ENCODE measurements at regions of chr2 and their contacts with region 1.

Region 1: DNA sequence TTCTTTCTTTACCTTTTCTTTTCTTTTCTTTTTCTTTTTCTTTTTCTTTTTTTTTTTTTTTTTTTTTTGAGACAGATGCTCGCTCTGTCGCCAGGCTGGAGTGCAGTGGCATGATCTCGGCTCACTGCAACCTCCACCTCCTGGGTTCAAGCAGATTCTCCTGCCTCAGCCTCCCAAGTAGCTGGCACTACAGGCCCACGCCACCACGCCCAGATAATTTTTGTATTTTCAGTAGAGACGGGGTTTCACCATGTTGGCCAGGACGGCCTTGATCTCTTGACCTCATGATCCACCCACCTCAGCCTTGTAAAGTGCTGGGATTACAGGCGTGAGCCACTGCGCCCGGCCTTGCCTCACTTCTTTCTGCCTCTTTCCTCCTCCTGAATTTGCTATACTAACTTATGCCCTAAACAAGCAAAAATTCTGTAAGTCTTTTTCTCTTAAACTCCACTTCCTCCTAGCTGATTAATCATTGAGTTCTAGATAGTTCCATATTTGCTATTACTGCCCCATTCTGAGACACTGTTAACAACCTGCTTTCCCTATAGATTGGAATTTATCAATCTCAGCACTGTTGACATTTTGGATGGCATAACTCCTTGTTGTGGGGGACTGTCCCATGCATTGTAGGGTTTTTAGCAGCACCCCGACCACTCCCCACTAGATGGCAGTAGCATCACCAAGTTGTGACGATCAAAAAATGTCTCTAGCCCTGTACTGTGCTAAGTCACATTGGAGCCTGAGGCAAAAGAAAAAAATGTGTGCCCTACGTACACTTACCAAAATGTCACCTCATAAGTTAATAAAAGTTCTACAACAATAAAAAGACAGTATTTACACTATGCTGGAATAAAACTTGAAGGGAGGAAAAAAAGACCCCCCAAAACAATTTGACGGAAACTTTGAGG is 16.4 kb upstream of the THADA start:
- DNase-seq: peak; percentile 63 to 71 (median 67)
- H3K4me3 ChIP-seq: no peak overlapping the region
- H3K4me3 Mint-ChIP-seq: no peak overlapping the region
- H3K27ac ChIP-seq: no peak overlapping the region
- H3K27ac Mint-ChIP-seq: peak overlapping the region in 1 of 7 donors; percentile 24
- H3K4me1 ChIP-seq: no peaks in the 10 kb centered on the region
- H3K4me1 Mint-ChIP-seq: peaks cover 0 to 4% (median 2%) of the 10 kb centered on the region in 4 donors
- H3K27me3 ChIP-seq: no peaks in the 10 kb centered on the region
- H3K27me3 Mint-ChIP-seq: peaks cover 3 to 6% of the 10 kb centered on the region in 2 donors

Region 2: DNA sequence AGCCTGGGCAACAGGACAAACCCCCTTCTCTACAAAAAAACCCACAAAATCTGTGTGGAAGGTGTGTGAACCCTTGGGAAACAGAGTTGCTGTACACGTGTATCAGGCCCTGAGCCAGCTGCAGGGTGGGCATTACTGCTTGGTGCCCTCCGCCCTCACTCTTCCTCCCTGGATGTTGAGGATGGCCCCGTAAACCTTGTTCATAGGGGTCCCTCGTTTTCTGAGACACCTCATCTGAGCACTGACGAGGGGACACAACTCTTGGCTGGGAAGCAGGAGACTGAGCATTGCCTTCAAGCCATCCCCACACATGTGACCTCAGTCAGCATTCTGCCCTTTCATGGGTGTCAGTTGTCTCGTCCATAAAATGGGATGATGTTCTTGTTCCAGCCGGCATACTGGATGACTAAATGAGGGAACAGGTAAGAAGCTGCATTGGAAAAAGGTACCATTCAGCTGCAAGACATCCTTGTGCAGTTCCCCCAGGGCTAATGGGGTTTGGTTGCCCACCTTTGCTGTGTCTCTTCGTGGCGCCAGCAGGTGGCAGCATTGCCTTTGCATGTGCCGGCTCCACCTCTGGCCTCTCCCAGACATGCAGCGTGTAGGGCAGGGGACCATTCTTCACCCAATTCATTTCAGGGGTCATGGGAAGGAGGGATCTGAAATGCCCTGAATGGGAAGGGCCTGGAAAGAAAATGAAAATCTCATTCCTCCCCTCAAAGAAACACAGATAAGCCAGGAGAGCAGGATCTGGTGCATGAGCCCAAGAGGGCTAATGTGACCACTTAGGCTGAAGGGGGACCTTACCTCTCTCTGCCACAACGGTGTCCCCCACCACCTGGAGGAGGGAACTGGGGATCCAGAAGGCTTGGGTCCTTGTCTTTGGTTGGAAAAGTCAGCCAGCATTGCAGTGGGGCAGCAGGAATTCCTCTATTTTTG is 783.5 kb before region 1 on chr2:
- CTCF ChIA-PET with region 1: interaction called, 4 read pairs
- POLR2A ChIA-PET with region 1: no interaction called
- intact Hi-C with region 1: loop called (anchors 1 kb)
- DNase-seq: peak; percentile 59 to 68 (median 63)
- H3K4me3 ChIP-seq: no peak overlapping the region
- H3K4me3 Mint-ChIP-seq: peak overlapping the region in 5 of 8 donors; percentile 17 to 57 (median 31)
- H3K27ac ChIP-seq: no peak overlapping the region
- H3K27ac Mint-ChIP-seq: peak overlapping the region in 1 of 7 donors; percentile 58
- H3K4me1 ChIP-seq: peaks cover 13% of the 10 kb centered on the region
- H3K4me1 Mint-ChIP-seq: peaks cover 8 to 20% (median 17%) of the 10 kb centered on the region in 4 donors
- H3K27me3 ChIP-seq: no peaks in the 10 kb centered on the region
- H3K27me3 Mint-ChIP-seq: peaks cover 3 to 10% of the 10 kb centered on the region in 2 donors

Region 3: GRCh38 chr2:42859006-42859552 is 753.2 kb before region 1 on chr2:
- CTCF ChIA-PET with region 1: no interaction called
- POLR2A ChIA-PET with region 1: no interaction called
- intact Hi-C with region 1: loop called (anchors 2 kb)
- DNase-seq: peak in 4 of 5 donors; percentile 26 to 55 (median 43)
- H3K4me3 ChIP-seq: no peak overlapping the region
- H3K4me3 Mint-ChIP-seq: no peak overlapping the region
- H3K27ac ChIP-seq: no peak overlapping the region
- H3K27ac Mint-ChIP-seq: no peak overlapping the region
- H3K4me1 ChIP-seq: no peaks in the 10 kb centered on the region
- H3K4me1 Mint-ChIP-seq: no peaks in the 10 kb centered on the region
- H3K27me3 ChIP-seq: no peaks in the 10 kb centered on the region
- H3K27me3 Mint-ChIP-seq: no peaks in the 10 kb centered on the region

Region 4: GRCh38 chr2:42944779-42945415 is 667.3 kb before region 1 on chr2:
- CTCF ChIA-PET with region 1: interaction called, 19 read pairs
- POLR2A ChIA-PET with region 1: no interaction called
- intact Hi-C with region 1: loop called (anchors 1 kb)
- DNase-seq: no peak
- H3K4me3 ChIP-seq: no peak overlapping the region
- H3K4me3 Mint-ChIP-seq: no peak overlapping the region
- H3K27ac ChIP-seq: no peak overlapping the region
- H3K27ac Mint-ChIP-seq: no peak overlapping the region
- H3K4me1 ChIP-seq: no peaks in the 10 kb centered on the region
- H3K4me1 Mint-ChIP-seq: peaks cover 0 to 2% (median under 1%) of the 10 kb centered on the region in 4 donors
- H3K27me3 ChIP-seq: no peaks in the 10 kb centered on the region
- H3K27me3 Mint-ChIP-seq: no peaks in the 10 kb centered on the region

Region 5: DNA sequence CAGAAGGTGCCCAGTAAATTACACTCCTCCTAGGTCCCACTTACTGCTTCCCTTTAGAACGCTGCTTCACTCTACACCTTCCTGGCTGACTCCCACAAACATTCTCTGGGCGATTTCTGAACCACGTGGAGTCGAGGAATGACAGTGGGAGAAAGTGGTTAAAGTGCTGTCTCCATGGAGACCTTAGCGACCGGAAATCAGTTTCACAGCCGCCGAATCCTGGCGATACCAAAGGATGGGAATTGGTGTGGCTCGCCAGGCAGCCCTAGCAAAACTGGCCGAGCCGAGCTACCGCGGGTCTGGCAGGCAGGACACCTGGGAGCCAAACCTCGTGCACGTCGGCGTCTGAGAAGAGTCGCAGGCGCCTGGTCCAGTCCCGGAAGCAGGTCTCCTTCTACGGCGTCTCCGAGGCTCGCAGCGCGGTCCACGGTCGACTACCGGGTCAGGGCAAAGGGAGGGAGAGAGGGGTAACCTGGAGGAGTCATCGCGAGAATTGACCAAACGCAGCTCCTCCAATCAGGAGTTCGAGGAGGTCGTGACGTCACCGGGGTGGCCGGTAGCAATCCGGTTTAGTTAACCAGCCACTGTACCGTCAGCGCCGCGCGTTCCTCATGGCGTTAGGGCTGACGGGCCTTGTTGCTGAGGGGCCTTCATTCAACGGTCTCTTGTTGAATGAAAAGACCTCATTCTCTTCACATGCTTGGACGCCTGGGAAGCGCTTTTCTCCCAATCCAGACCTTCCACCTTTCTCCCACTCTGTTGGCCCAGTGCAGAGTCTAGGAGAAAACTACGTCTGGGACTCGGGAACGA is 16.4 kb before region 1 on chr2 and contains the start of gene THADA:
- CTCF ChIA-PET with region 1: interaction called, 38 read pairs
- POLR2A ChIA-PET with region 1: interaction called, 5 read pairs
- intact Hi-C with region 1: loop called (anchors 1 kb)
- DNase-seq: peak; percentile 93 to 95 (median 95)
- H3K4me3 ChIP-seq: peak within 1 kb of the TSS; percentile 73 to 82
- H3K4me3 Mint-ChIP-seq: peak within 1 kb of the TSS; percentile 91 to 97 (median 96)
- H3K27ac ChIP-seq: peak within 1 kb of the TSS; percentile 89
- H3K27ac Mint-ChIP-seq: peak within 1 kb of the TSS; percentile 97 to 99 (median 99)
- H3K4me1 ChIP-seq: peaks cover 28% of the 10 kb centered on the region
- H3K4me1 Mint-ChIP-seq: peaks cover 22 to 44% (median 30%) of the 10 kb centered on the region in 4 donors
- H3K27me3 ChIP-seq: no peaks in the 10 kb centered on the region
- H3K27me3 Mint-ChIP-seq: no peaks in the 10 kb centered on the region
- total RNA-seq, gene THADA: 42.1 to 44.8 TPM

Region 6: DNA sequence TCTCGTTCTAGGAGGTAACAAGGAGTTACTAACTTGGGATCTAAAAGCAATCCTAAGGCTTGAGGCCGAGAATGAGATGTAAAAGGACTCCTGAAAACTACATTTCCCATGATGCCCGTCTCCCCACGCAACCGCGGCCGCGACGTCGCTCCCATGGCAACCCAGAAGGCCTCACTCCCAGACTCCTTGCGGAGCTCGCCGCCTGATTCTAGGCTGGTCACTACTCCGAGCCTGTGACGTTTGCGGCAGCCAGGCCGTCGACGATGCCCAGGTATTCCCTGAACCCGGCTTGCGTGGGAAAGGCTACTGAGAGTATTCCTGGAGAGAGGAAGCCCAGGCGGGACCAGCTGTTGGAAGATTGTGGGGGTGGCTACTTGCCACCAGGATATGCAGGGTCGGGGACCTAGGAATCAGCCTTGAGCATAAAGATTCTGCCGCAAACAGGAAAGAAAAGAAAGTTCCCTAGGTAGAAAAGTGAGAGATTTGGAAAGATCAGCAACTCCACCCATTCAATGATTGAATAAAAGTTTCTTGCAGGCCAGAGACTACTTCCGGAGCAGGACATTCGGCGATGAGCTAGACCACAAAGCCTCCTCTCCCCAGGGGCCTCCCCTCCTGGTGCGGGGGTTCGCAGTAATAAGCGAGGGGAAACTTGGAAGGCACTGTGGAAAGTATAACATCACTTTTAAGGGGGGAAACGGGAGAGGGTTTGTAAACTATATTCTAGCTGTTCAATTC is 161.8 kb after region 1 on chr2 and contains the start of gene DYNC2LI1:
- CTCF ChIA-PET with region 1: no interaction called
- POLR2A ChIA-PET with region 1: no interaction called
- intact Hi-C with region 1: no loop called
- DNase-seq: peak; percentile 65 to 75 (median 70)
- H3K4me3 ChIP-seq: peak within 1 kb of the TSS; percentile 93 to 100
- H3K4me3 Mint-ChIP-seq: peak within 1 kb of the TSS; percentile 93 to 98 (median 96)
- H3K27ac ChIP-seq: peak within 1 kb of the TSS; percentile 53
- H3K27ac Mint-ChIP-seq: peak within 1 kb of the TSS; percentile 58 to 97 (median 91)
- H3K4me1 ChIP-seq: peaks cover 12% of the 10 kb centered on the region
- H3K4me1 Mint-ChIP-seq: peaks cover 7 to 13% (median 11%) of the 10 kb centered on the region in 4 donors
- H3K27me3 ChIP-seq: no peaks in the 10 kb centered on the region
- H3K27me3 Mint-ChIP-seq: peaks cover 3% of the 10 kb centered on the region in 2 donors
- total RNA-seq, gene DYNC2LI1: 2.9 to 3.9 TPM

Region 7: DNA sequence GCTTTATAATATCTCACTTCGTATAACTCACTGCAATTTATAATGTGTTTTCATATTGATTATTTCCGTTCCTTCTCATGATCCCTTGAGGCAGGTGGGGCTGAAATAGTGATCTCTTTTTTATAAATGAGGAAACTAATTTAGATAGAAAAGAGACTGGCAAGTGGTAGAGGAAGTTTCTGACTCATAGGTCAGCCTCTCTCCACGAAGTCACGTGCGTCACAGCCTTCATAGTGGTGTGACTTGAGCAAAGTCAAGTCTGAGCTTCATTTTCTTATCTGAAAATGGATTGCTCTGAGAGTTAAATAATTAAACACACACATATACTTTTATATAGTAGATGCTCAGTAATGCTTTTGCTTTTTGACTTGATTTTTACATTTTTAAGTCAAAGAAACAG is 206.5 kb after region 1 on chr2:
- CTCF ChIA-PET with region 1: no interaction called
- POLR2A ChIA-PET with region 1: no interaction called
- intact Hi-C with region 1: no loop called
- DNase-seq: no peak
- H3K4me3 ChIP-seq: no peak overlapping the region
- H3K4me3 Mint-ChIP-seq: no peak overlapping the region
- H3K27ac ChIP-seq: no peak overlapping the region
- H3K27ac Mint-ChIP-seq: no peak overlapping the region
- H3K4me1 ChIP-seq: no peaks in the 10 kb centered on the region
- H3K4me1 Mint-ChIP-seq: no peaks in the 10 kb centered on the region
- H3K27me3 ChIP-seq: no peaks in the 10 kb centered on the region
- H3K27me3 Mint-ChIP-seq: peaks cover 9 to 15% of the 10 kb centered on the region in 2 donors

Measured in CD4-positive, alpha-beta memory T cell (primary cell).